ENCODE measurements at regions of chr17 and their contacts with region 1.

Region 1: DNA sequence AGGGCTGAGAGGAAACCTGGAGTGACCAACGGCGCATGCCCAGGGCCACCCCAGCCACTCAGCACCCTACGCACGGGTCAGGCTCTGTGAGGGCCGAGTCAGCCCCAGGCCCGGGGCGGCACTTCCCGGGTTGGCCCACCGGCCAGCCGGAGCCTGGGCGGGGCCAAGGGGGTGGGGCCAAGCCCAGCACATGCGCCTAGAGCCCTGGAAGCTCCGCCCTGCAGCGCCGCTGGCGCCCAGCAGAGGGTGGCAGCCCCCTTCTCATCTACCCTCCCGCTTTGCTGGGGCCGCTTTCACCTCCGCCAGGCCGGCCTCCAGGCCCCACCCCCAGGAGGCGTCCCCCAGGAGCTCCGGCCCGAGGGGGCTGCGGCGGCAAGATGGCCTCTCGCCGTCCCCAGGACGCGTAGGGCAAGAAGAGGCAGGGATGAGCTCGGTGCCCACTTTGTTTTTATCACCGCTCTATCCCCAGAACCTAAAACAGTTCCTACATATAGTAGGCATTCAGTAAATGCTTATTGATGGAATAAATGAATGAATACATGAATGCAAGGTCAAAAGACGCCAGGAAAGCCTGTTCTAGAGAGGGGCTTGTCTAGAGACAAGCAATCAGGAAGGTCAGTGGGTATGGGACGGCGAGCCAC is 31.3 kb downstream of the MYO18A start:
- DNase-seq: peak; percentile 98
- ATAC-seq: peak; percentile 94
- H3K4me3 Mint-ChIP-seq: peak overlapping the region; percentile 72
- H3K27ac Mint-ChIP-seq: peak overlapping the region; percentile 95
- H3K4me1 Mint-ChIP-seq: peaks cover 38% of the 10 kb centered on the region
- H3K27me3 Mint-ChIP-seq: no peaks in the 10 kb centered on the region
- CTCF ChIP-seq: peak; percentile 89

Region 2: GRCh38 chr17:28944862-28945741 is 203.8 kb before region 1 on chr17:
- CTCF ChIA-PET with region 1: no interaction called
- POLR2A ChIA-PET with region 1: no interaction called
- DNase-seq: no peak
- ATAC-seq: no peak
- H3K4me3 Mint-ChIP-seq: no peak overlapping the region
- H3K27ac Mint-ChIP-seq: peak overlapping the region; percentile 64
- H3K4me1 Mint-ChIP-seq: peaks cover 39% of the 10 kb centered on the region
- H3K27me3 Mint-ChIP-seq: no peaks in the 10 kb centered on the region
- CTCF ChIP-seq: no peak

Region 3: GRCh38 chr17:29124117-29124924 is 24.6 kb before region 1 on chr17:
- CTCF ChIA-PET with region 1: interaction called, 269 read pairs
- POLR2A ChIA-PET with region 1: interaction called, 5 read pairs
- DNase-seq: peak; percentile 51
- ATAC-seq: peak; percentile 87
- H3K4me3 Mint-ChIP-seq: no peak overlapping the region
- H3K27ac Mint-ChIP-seq: no peak overlapping the region
- H3K4me1 Mint-ChIP-seq: peaks cover 3% of the 10 kb centered on the region; the same call in 1 of the 2 replicates
- H3K27me3 Mint-ChIP-seq: no peaks in the 10 kb centered on the region
- CTCF ChIP-seq: no peak

Region 4: DNA sequence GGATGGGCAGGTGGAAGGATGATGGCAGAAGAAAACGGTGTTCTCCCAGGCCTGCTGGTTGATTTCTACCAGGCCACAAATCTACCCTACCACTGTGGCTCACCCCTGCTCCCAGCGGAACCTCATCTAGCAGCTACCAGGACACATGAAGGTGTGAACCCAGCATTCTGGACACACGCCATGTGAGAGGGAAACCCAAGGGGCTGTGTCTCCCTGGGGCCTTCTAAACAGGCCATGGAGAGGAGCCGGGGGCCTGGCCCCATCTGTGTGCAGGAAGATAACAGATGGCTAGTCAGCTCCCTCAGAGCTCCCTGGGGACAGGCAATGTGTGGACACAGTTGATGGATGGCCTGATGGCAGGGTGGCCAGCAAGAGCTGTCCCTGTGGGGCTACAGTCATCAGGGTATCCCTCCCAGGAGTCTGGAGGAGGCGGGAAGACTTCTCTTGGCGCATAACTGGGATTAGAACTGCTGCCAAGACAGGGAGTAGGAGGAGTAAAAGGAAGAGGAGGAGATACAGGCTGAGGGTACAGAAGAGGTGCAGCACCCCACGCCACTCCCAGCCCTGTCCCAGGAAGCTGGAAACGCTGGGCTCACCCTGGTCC is 13.9 kb after region 1 on chr17:
- CTCF ChIA-PET with region 1: interaction called, 28 read pairs
- POLR2A ChIA-PET with region 1: no interaction called
- DNase-seq: no peak
- ATAC-seq: no peak
- H3K4me3 Mint-ChIP-seq: no peak overlapping the region
- H3K27ac Mint-ChIP-seq: no peak overlapping the region
- H3K4me1 Mint-ChIP-seq: peaks cover 8% of the 10 kb centered on the region
- H3K27me3 Mint-ChIP-seq: no peaks in the 10 kb centered on the region
- CTCF ChIP-seq: no peak

Region 5: DNA sequence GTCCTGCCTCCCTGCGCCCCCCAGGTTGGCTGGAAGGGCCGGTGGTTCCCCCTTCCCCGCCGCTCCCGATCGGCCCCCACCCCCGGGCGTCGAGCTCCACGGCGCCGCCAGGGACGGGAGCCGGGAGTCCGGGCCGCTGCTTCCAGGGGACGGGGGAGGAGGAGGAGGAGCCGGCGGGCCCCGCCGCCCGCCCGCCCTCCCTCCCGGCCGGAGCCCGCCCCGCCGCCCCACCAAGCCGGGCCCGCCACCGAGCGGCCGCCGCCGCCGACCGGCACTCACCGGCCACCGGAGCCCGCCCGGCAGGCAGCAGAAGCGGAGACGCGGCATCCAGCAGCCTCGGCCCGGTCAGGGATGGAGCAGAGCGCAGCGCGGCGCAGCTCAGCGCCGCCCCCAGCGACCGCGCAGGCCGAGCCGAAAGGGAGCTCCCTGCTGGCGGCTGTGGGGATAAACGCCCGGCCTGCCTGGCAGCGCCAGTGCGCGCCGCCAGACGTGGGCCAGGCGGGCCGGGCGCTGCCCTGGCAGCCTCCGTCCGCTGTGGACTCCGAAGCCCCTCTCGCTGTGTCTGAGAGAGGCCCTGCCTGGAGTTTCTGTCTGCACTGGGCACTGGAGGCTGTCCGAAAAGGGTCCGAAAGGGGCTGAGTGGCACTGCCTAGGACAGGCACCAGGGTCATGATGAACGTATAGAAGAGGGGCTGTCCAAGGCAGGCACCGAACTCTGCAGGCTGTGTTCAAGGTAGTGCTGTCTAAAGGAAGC is 31.3 kb after region 1 on chr17 and contains the start of gene MYO18A:
- CTCF ChIA-PET with region 1: interaction called, 464 read pairs
- POLR2A ChIA-PET with region 1: interaction called, 29 read pairs
- DNase-seq: peak; percentile 85
- ATAC-seq: peak; percentile 63
- H3K4me3 Mint-ChIP-seq: peak within 1 kb of the TSS; percentile 81
- H3K27ac Mint-ChIP-seq: peak within 1 kb of the TSS; percentile 93
- H3K4me1 Mint-ChIP-seq: peaks cover 32% of the 10 kb centered on the region
- H3K27me3 Mint-ChIP-seq: peaks cover 18% of the 10 kb centered on the region
- CTCF ChIP-seq: peak; percentile 74
- total RNA-seq, gene MYO18A: 38.5 to 54.9 TPM (median 42.5 TPM) in 3 replicates

Region 6: DNA sequence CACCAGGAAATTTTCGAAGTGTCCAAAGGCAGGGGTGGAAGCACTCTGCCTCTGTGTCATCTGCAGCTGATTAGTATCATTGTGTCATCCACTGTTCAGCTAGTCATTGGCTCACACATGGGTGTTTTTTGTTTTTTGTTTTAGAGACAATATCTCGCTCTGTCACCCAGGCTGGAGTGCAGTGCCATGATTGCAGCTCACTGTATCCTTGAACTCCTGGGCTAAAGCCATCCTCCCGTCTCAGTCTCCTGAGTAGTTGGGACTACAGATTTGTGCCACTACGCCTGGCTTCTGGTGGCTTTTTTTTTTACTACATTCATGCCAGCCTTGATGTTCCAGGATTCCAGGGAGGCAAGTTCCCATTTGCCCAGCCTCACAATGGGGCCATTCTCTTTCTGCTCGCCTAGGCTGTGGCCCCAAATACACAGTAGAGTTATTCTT is 63.8 kb after region 1 on chr17:
- CTCF ChIA-PET with region 1: interaction called, 222 read pairs
- POLR2A ChIA-PET with region 1: no interaction called
- DNase-seq: no peak
- ATAC-seq: no peak
- H3K4me3 Mint-ChIP-seq: no peak overlapping the region
- H3K27ac Mint-ChIP-seq: no peak overlapping the region
- H3K4me1 Mint-ChIP-seq: peaks cover 11% of the 10 kb centered on the region
- H3K27me3 Mint-ChIP-seq: no peaks in the 10 kb centered on the region
- CTCF ChIP-seq: no peak

Region 7: DNA sequence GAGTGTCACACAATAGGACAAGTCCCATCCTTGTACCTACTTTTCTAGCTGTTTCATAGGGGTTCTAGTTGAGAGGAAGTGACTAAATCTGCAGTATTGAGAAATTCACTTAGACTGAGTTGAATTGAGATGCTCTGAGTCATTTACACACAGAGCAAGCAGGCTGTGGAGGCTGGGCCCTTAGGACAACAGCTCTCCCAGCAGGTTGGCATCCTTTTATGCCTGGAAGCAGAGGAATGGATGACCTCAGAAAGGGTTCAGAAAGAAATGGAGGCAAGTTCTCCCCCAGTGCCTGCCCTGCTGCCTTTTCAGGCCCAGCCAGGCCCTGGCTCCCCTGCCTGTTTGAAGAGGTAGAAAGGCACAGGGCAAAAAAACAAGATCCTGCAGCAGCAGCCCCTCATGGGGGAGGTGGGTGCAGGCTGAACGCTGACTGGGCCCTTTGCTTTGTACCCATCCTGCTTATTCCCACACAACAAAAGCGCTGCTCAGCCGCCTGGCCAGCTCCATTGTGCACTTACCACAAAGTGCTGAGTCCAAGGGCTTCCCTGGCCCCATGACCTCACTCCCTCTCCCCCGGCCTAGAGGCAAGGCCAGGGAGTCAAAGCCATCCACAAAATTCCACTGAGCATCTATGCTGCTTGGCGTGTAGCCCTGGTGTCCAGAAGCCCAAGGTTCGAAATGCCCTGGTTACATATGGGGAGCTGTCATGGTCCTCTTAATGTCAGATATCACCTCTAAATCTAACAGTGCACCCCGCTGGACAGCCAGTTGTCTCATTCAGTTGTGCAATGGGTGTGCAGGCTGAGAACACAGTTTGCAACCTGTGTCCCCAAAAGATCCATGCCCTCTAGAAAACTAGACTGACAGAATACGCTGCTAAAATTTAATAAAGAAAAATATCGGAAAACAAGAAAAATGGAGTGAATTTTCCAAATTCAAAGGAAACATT is 92.4 kb after region 1 on chr17:
- CTCF ChIA-PET with region 1: interaction called, 41 read pairs
- POLR2A ChIA-PET with region 1: no interaction called
- DNase-seq: peak; percentile 24
- ATAC-seq: peak; percentile 79
- H3K4me3 Mint-ChIP-seq: no peak overlapping the region
- H3K27ac Mint-ChIP-seq: peak overlapping the region; percentile 35; the same call in 1 of the 2 replicates
- H3K4me1 Mint-ChIP-seq: peaks cover 27% of the 10 kb centered on the region
- H3K27me3 Mint-ChIP-seq: no peaks in the 10 kb centered on the region
- CTCF ChIP-seq: no peak

Region 8: GRCh38 chr17:29293890-29294579 is 145.1 kb after region 1 on chr17 and contains the start of gene NUFIP2:
- CTCF ChIA-PET with region 1: interaction called, 22 read pairs
- POLR2A ChIA-PET with region 1: interaction called, 9 read pairs
- DNase-seq: peak; percentile 99
- ATAC-seq: peak; percentile 94
- H3K4me3 Mint-ChIP-seq: peak within 1 kb of the TSS; percentile 100
- H3K27ac Mint-ChIP-seq: peak within 1 kb of the TSS; percentile 99
- H3K4me1 Mint-ChIP-seq: peaks cover 32% of the 10 kb centered on the region
- H3K27me3 Mint-ChIP-seq: no peaks in the 10 kb centered on the region
- CTCF ChIP-seq: no peak
- total RNA-seq, gene NUFIP2: 87.1 to 93.1 TPM (median 90.5 TPM) in 3 replicates

Measured in WTC11 (cell line).